WTC11 (cell line): ENCODE measurements at regions of chr10 and their contacts with region 1.

Region 1: DNA sequence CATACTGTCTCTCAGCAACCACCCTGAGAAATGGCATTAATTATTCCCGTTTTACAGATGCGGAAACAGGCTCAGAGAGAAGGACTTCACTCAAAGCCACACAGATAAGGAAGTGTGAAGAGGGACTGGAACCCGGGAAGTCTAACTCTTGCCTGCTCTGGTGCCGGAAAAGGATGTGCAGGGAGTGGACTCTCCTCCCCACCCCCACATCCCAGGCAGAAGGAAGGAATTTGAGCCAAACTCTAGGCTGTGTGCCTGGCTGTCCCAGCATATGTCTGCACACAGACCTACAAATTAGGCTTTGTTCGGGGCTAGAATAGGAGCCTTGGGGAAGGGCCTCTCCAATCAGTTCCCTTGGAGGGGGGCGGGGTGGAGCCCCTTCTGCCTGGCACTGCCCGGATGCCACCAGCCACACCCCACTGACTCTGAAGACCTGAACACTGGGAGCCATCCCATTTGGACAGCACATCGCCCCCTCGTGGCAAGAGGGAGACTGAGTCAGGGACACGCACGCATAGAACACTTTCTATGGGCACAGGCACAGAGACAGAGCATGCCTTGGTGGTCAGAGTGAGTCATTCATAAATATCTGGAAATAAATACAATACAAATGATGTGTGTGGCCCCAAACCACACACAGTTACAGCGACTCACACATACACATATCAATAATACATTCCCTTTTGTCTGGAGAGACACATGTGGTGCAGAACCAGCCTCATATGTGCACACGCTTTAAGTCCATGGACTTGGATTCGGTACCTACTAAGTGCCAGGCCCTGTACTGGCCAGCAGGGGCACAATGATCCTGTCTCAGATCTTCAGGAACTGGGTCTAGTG is 13.1 kb downstream of the LZTS2 start:
- DNase-seq: peak; percentile 84
- ATAC-seq: peak; percentile 68
- H3K4me3 Mint-ChIP-seq: no peak overlapping the region
- H3K27ac Mint-ChIP-seq: no peak overlapping the region
- H3K4me1 Mint-ChIP-seq: peaks cover 33% of the 10 kb centered on the region
- H3K27me3 Mint-ChIP-seq: peaks cover 34% of the 10 kb centered on the region
- CTCF ChIP-seq: peak; percentile 63

Region 2: DNA sequence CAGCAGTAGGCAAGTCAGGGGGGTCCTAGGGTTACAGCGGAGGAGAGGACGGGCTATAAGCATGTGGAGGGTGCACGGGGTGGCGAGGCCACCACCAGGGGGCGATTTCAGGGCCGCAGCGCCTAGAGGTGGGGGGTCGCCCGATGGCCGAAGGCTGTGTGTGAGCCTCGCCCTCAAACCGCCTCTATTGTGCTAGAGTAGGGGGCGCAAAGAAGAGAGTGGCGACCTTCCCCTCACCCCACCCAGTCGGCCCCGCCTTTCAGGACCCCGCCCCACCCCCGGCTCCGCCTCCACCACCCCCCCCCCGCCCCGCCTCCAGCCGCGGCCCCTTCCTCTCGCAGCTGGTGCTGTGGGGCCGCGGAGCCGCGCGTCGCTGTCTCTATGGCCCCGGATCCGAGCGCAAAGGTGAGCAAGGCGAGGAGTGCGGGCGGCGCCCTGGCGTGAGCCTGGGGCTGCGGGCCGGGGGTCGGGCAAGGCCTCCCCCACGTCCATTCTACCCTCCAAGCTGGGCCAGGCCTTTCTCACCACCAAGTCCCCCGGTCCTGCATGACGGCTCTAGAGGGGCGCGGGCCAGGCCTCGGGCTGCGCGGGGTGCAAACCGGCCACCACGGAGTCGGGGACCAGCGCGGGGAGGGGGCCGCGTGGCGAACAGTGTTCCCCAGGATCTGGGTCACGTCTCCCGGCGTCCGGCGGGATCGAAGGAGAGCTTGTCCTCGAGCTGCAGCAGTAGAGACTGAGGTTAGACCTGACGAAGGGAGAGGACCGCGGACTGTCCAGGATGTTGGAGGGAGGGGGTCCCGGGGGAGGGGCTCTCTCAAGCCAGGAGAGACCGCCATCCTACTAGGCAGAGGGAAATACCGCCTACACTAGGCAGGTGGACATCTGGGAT is 43.3 kb before region 1 on chr10 and contains the start of gene SEMA4G:
- CTCF ChIA-PET with region 1: interaction called, 41 read pairs
- POLR2A ChIA-PET with region 1: no interaction called
- DNase-seq: peak; percentile 76
- ATAC-seq: peak; percentile 84
- H3K4me3 Mint-ChIP-seq: peak within 1 kb of the TSS; percentile 74
- H3K27ac Mint-ChIP-seq: no peak within 1 kb of the TSS
- H3K4me1 Mint-ChIP-seq: peaks cover 31% of the 10 kb centered on the region
- H3K27me3 Mint-ChIP-seq: no peaks in the 10 kb centered on the region; the same call in 1 of the 2 replicates
- CTCF ChIP-seq: peak; percentile 59; the same call in 1 of the 2 replicates
- total RNA-seq, gene SEMA4G: 9.7 to 13.0 TPM (median 11.8 TPM) in 3 replicates

Region 3: GRCh38 chr10:100986952-100987750 is 25.6 kb before region 1 on chr10 and contains the starts of genes MRPL43 and TWNK:
- CTCF ChIA-PET with region 1: interaction called, 273 read pairs
- POLR2A ChIA-PET with region 1: no interaction called
- DNase-seq: peak; percentile 88
- ATAC-seq: peak; percentile 86
- H3K4me3 Mint-ChIP-seq: peak within 1 kb of the TSS; percentile 93
- H3K27ac Mint-ChIP-seq: peak within 1 kb of the TSS; percentile 93
- H3K4me1 Mint-ChIP-seq: peaks cover 13% of the 10 kb centered on the region
- H3K27me3 Mint-ChIP-seq: no peaks in the 10 kb centered on the region
- CTCF ChIP-seq: no peak
- total RNA-seq, gene MRPL43: 81.0 to 91.3 TPM (median 85.9 TPM) in 3 replicates
- total RNA-seq, gene TWNK: 24.5 to 28.2 TPM (median 26.2 TPM) in 3 replicates

Region 4: DNA sequence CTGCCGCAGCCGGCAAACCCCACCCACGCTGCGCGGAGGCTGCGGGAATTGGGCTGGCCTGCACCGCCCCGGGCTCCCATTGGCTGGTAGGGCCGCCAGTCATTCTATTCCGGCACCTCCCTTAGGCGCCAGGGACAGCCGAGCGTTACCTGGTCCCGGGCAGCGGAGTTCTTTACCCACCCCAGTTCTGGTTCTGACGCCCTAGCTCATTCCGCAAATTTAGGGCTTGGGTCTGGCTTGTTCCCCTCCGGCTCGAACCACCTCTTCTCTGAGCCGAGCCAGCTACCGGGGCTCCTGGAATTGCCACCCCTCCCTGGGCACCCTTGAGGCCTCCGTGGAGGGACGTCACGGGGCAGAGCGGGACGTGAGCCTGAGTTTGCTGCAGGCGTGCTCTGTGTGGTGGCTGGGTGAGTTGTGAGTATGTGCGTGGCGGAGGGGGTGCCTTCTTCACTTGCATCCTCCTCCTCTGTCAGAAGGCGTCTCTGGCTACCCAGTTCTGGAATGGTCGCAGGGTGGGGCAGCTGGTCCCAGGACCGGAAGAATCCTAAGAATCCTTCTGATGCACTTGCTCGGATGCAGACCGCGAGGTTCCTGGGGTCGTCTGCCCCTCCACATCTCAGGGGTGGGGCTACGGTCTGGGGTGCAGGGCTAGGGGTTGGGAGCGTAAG is 18.5 kb after region 1 on chr10 and contains the starts of genes PDZD7 and SFXN3:
- CTCF ChIA-PET with region 1: interaction called, 219 read pairs
- POLR2A ChIA-PET with region 1: no interaction called
- DNase-seq: peak; percentile 97
- ATAC-seq: peak; percentile 88
- H3K4me3 Mint-ChIP-seq: peak within 1 kb of the TSS; percentile 75
- H3K27ac Mint-ChIP-seq: no peak within 1 kb of the TSS
- H3K4me1 Mint-ChIP-seq: peaks cover 36% of the 10 kb centered on the region
- H3K27me3 Mint-ChIP-seq: peaks cover 55% of the 10 kb centered on the region
- CTCF ChIP-seq: no peak
- total RNA-seq, gene PDZD7: 1.9 to 2.7 TPM (median 2.6 TPM) in 3 replicates
- total RNA-seq, gene SFXN3: 2.5 to 5.6 TPM (median 3.2 TPM) in 3 replicates